ENCODE measurements at regions of chr7 and their contacts with region 1.

Region 1: DNA sequence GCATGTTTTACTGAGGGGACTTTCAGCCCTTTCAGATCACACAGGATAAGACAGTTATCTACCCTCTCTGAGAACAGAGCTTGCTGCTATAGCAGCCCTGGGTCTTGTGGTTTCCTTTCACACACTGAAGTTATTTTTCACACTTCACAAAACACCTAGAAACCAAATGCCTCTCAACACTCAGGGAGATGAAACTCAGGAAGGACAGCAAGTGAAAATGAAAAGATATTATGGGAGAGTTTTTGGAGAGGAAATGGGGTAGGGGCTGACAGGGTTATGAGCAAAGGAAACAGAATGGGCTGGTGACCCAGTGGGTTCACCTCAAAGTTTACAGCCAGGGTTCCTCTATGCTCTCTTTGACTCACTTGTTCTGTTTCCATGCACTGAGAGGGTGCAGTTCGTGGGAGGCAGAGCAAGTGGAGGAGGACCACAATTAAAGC is 17.0 kb upstream of the GIMAP2 start:
- DNase-seq: peak in 9 of 10 donors; percentile 41 to 86 (median 71)
- ATAC-seq: peak; percentile 79 to 92
- H3K4me3 Mint-ChIP-seq: peak overlapping the region; percentile 60 to 85 (median 78)
- H3K27ac Mint-ChIP-seq: peak overlapping the region; percentile 94 to 100 (median 98)
- H3K4me1 Mint-ChIP-seq: peaks cover 34 to 93% (median 89%) of the 10 kb centered on the region in 4 donors
- H3K27me3 Mint-ChIP-seq: no peaks in the 10 kb centered on the region

Region 2: GRCh38 chr7:150642926-150643325 is 25.6 kb before region 1 on chr7:
- POLR2A ChIA-PET with region 1: interaction called, 37 read pairs
- DNase-seq: no peak
- ATAC-seq: no peak
- H3K4me3 Mint-ChIP-seq: peak overlapping the region in 1 of 10 donors; percentile 19
- H3K27ac Mint-ChIP-seq: peak overlapping the region in 7 of 10 donors; percentile 9 to 82 (median 63)
- H3K4me1 Mint-ChIP-seq: peaks cover 25 to 83% (median 63%) of the 10 kb centered on the region in 4 donors
- H3K27me3 Mint-ChIP-seq: no peaks in the 10 kb centered on the region

Region 3: DNA sequence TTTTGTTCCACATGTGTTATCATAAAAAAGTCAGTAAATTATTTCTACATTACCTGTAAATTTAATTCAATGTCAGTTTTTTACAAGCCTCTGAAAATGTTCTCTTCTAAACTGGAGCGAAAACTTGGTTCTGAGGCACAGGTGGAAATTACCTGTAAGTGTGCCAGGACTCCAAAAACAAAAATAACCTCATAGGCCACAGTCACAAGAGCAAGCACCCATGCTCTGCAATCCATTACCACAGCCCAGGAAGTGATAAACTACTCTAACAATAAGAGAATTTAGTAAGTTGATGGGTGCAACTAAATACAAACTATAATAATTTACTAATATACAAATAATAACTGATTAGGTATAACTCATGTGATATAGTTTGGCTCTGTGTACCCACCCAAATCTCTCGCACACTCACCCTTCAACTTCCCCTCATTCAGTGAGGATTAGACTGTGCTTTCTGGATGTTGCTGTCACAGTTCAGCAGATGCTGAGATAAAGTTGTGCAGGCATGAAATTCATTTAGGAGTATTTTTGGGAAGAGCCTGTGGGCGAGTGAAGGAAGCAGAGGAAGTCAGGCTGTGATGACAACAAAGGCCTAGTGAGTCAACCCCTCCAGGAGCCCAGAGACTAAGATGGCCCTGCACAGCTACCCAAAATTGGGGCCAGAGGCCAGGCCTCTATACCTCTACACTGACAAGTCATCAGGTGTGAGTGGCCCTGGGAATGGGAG is 20.0 kb before region 1 on chr7:
- POLR2A ChIA-PET with region 1: interaction called, 37 read pairs
- DNase-seq: peak in 2 of 10 donors; percentile 49 to 53
- ATAC-seq: peak; percentile 85 to 87
- H3K4me3 Mint-ChIP-seq: peak overlapping the region in 9 of 10 donors; percentile 43 to 75 (median 57)
- H3K27ac Mint-ChIP-seq: peak overlapping the region; percentile 82 to 94 (median 88)
- H3K4me1 Mint-ChIP-seq: peaks cover 16 to 77% (median 55%) of the 10 kb centered on the region in 4 donors
- H3K27me3 Mint-ChIP-seq: no peaks in the 10 kb centered on the region

Region 4: GRCh38 chr7:150657526-150657925 is 11.0 kb before region 1 on chr7:
- POLR2A ChIA-PET with region 1: interaction called, 10 read pairs
- DNase-seq: no peak
- ATAC-seq: no peak
- H3K4me3 Mint-ChIP-seq: no peak overlapping the region
- H3K27ac Mint-ChIP-seq: no peak overlapping the region
- H3K4me1 Mint-ChIP-seq: peaks cover 12 to 53% (median 42%) of the 10 kb centered on the region in 4 donors
- H3K27me3 Mint-ChIP-seq: no peaks in the 10 kb centered on the region

Region 5: GRCh38 chr7:150737265-150738055 is 69.0 kb after region 1 on chr7 and contains the start of gene GIMAP5:
- POLR2A ChIA-PET with region 1: interaction called, 14 read pairs
- DNase-seq: peak in 6 of 10 donors; percentile 27 to 60 (median 40)
- ATAC-seq: peak; percentile 67 to 76
- H3K4me3 Mint-ChIP-seq: peak within 1 kb of the TSS; percentile 88 to 100 (median 98)
- H3K27ac Mint-ChIP-seq: peak within 1 kb of the TSS; percentile 93 to 100 (median 96)
- H3K4me1 Mint-ChIP-seq: peaks cover 48 to 75% (median 68%) of the 10 kb centered on the region in 4 donors
- H3K27me3 Mint-ChIP-seq: no peaks in the 10 kb centered on the region
- polyA plus RNA-seq, gene GIMAP5: 320 to 506 (median 401) TPM

Region 6: GRCh38 chr7:150824379-150825177 is 156.1 kb after region 1 on chr7:
- POLR2A ChIA-PET with region 1: no interaction called
- DNase-seq: no peak
- ATAC-seq: no peak
- H3K4me3 Mint-ChIP-seq: no peak overlapping the region
- H3K27ac Mint-ChIP-seq: peak overlapping the region in 1 of 10 donors; percentile 27
- H3K4me1 Mint-ChIP-seq: no peaks in the 10 kb centered on the region
- H3K27me3 Mint-ChIP-seq: peaks cover 8 to 23% (median 17%) of the 10 kb centered on the region in 5 donors